GM13976 (cell line): ENCODE measurements at regions of chr20 and their contacts with region 1.

Region 1: DNA sequence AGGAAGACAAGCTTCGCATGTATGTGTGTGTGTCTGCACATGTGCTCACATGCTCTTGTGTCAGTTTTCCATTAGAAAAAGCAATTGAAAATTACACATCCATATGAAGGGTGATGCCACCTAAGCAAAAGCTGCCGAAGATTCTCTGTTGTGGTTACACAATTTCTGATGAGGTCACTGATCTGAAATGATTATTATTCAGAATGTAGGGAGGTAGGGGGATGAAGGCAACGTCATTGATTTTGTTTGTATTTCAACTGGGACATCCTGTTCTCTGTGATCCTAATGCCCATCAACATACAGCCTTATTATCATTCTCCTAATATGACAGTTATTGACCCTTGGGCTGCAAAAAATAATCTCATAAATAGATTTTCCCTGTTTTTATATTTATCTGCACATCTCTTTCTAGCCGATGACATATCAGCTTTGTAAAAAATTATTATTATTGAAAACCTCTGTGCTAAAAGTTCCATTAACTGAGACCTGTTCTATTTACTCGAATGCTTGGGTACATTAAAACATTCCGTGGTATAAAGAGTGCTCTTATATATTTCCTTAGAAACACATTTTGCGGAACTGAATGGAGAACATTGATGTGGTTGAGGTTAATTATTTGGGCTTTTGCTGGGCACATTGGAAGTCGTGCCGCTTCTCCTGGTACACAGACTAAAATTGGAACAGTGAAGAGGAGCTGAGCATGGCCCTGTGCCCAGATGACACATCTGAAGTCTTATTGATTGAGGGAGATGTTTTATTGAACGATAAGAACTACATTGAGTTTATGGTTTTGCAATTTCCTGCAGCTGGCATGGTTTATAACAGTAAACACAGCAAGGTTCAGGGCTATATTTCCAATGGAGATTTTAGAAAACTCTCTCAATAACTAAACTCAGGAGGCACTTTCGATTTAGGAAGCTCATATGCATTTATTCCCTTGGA is 51.3 kb downstream of the ZNF831 start:
- DNase-seq: no peak
- CTCF ChIP-seq: no peak

Region 2: GRCh38 chr20:59087829-59088433 is 126.9 kb before region 1 on chr20:
- in situ Hi-C with region 1: loop called (anchors 5 kb)
- DNase-seq: peak; percentile 52
- CTCF ChIP-seq: peak; percentile 79

Region 3: GRCh38 chr20:59177261-59178250 is 37.3 kb before region 1 on chr20:
- in situ Hi-C with region 1: no loop called
- DNase-seq: no peak
- CTCF ChIP-seq: no peak